GM12878 (cell line): ENCODE measurements at regions of chrX and their contacts with region 1.

Region 1: GRCh38 chrX:106415276-106415895 is 196.4 kb upstream of the RADX start:
- DNase-seq: no peak
- ATAC-seq: peak; percentile 80
- H3K4me3 ChIP-seq: no peak overlapping the region
- H3K27ac ChIP-seq: no peak overlapping the region
- H3K4me1 ChIP-seq: no peaks in the 10 kb centered on the region
- H3K27me3 ChIP-seq: no peaks in the 10 kb centered on the region
- CTCF ChIP-seq: peak; percentile 64 to 79 (median 66)
- EP300 ChIP-seq: no peak
- POLR2A ChIP-seq: no peak
- RAD21 ChIP-seq: peak; percentile 38

Region 2: GRCh38 chrX:106177106-106177981 is 238.0 kb before region 1 on chrX:
- CTCF ChIA-PET with region 1: no interaction called
- POLR2A ChIA-PET with region 1: no interaction called
- RAD21 ChIA-PET with region 1: no interaction called
- SMC1A ChIA-PET with region 1: no interaction called
- in situ Hi-C with region 1: no loop called
- intact Hi-C with region 1: no loop called
- DNase-seq: no peak
- ATAC-seq: no peak
- H3K4me3 ChIP-seq: no peak overlapping the region
- H3K27ac ChIP-seq: no peak overlapping the region
- H3K4me1 ChIP-seq: no peaks in the 10 kb centered on the region
- H3K27me3 ChIP-seq: no peaks in the 10 kb centered on the region
- CTCF ChIP-seq: no peak
- EP300 ChIP-seq: no peak
- POLR2A ChIP-seq: no peak
- RAD21 ChIP-seq: no peak

Region 3: GRCh38 chrX:106404512-106404911 is 10.9 kb before region 1 on chrX:
- CTCF ChIA-PET with region 1: interaction called, 12 read pairs
- POLR2A ChIA-PET with region 1: no interaction called
- RAD21 ChIA-PET with region 1: no interaction called
- SMC1A ChIA-PET with region 1: no interaction called
- in situ Hi-C with region 1: no loop called
- intact Hi-C with region 1: no loop called
- DNase-seq: no peak
- ATAC-seq: no peak
- H3K4me3 ChIP-seq: no peak overlapping the region
- H3K27ac ChIP-seq: no peak overlapping the region
- H3K4me1 ChIP-seq: no peaks in the 10 kb centered on the region
- H3K27me3 ChIP-seq: no peaks in the 10 kb centered on the region
- CTCF ChIP-seq: no peak
- EP300 ChIP-seq: no peak
- POLR2A ChIP-seq: no peak
- RAD21 ChIP-seq: no peak

Region 4: GRCh38 chrX:106619797-106620196 is 204.4 kb after region 1 on chrX:
- CTCF ChIA-PET with region 1: interaction called, 12 read pairs
- POLR2A ChIA-PET with region 1: no interaction called
- RAD21 ChIA-PET with region 1: interaction called, 4 read pairs
- SMC1A ChIA-PET with region 1: interaction called, 4 read pairs
- in situ Hi-C with region 1: no loop called
- intact Hi-C with region 1: no loop called
- DNase-seq: no peak
- ATAC-seq: peak; percentile 66
- H3K4me3 ChIP-seq: no peak overlapping the region
- H3K27ac ChIP-seq: no peak overlapping the region
- H3K4me1 ChIP-seq: no peaks in the 10 kb centered on the region
- H3K27me3 ChIP-seq: no peaks in the 10 kb centered on the region
- CTCF ChIP-seq: peak; percentile 45 to 53 (median 50); a peak in 5 of 6 replicates
- EP300 ChIP-seq: no peak
- POLR2A ChIP-seq: no peak
- RAD21 ChIP-seq: peak; percentile 53